Activated naive CD4-positive, alpha-beta T cell treated with anti-CD3 and anti-CD28 coated beads for 36 hours (primary cell): ENCODE measurements at regions of chr9 and their contacts with region 1.

Region 1: GRCh38 chr9:69759421-69760277 is at the start of gene PTAR1:
- DNase-seq: peak; percentile 90
- H3K4me3 Mint-ChIP-seq: peak within 1 kb of the TSS; percentile 95
- H3K27ac Mint-ChIP-seq: peak within 1 kb of the TSS; percentile 94
- H3K4me1 Mint-ChIP-seq: peaks cover 29% of the 10 kb centered on the region
- H3K27me3 Mint-ChIP-seq: no peaks in the 10 kb centered on the region
- total RNA-seq, gene PTAR1: 41.6 to 44.8 TPM

Region 2: GRCh38 chr9:69174616-69175463 is 584.8 kb before region 1 on chr9:
- CTCF ChIA-PET with region 1: no interaction called
- intact Hi-C with region 1: loop called (anchors 10 kb)
- DNase-seq: peak; percentile 84
- H3K4me3 Mint-ChIP-seq: peak overlapping the region; percentile 77
- H3K27ac Mint-ChIP-seq: peak overlapping the region; percentile 37
- H3K4me1 Mint-ChIP-seq: peaks cover 39% of the 10 kb centered on the region
- H3K27me3 Mint-ChIP-seq: peaks cover 43% of the 10 kb centered on the region

Region 3: DNA sequence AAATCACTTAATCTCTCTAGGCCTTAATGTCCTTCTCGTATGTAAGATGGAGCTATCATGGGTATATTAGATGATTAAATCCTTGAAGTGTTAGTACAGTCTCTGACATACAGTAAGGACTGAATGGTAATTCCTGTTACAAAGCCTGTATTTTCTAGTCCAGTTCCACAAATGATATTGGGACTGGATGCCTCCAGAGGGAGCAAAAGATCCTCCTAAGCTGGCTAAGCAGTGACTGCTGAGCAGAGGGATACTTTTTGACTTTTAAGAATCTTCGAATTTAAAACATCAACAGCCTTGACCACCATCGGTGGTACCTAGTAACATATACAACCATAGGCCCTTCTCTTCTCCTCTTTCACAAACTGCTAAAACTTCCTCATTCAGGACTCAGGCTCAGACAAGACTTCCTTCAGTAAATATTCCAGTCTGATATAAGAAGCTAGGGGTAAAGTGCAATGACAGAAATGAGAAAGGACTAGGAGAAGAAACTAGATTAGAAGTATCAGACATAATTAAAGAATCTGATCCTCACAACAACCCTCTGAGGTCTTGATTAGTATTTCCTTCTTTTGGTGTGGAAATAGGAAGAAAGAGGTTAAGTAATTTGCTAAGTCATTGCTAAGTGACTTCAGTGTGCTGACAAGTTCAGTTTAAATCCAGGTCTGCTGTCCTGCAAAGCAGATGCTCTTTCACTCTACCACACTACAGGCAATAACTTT is 13.8 kb before region 1 on chr9:
- CTCF ChIA-PET with region 1: interaction called, 3 read pairs
- intact Hi-C with region 1: loop called (anchors 1 kb)
- DNase-seq: no peak
- H3K4me3 Mint-ChIP-seq: no peak overlapping the region
- H3K27ac Mint-ChIP-seq: no peak overlapping the region
- H3K4me1 Mint-ChIP-seq: peaks cover 29% of the 10 kb centered on the region
- H3K27me3 Mint-ChIP-seq: no peaks in the 10 kb centered on the region

Region 4: GRCh38 chr9:69877854-69878514 is 118.3 kb after region 1 on chr9:
- CTCF ChIA-PET with region 1: no interaction called
- intact Hi-C with region 1: loop called (anchors 1 kb)
- DNase-seq: no peak
- H3K4me3 Mint-ChIP-seq: no peak overlapping the region
- H3K27ac Mint-ChIP-seq: no peak overlapping the region
- H3K4me1 Mint-ChIP-seq: no peaks in the 10 kb centered on the region
- H3K27me3 Mint-ChIP-seq: peaks cover 4% of the 10 kb centered on the region